H1 (cell line): ENCODE measurements at regions of chr6 and their contacts with region 1.

Region 1: GRCh38 chr6:99905209-99906106 is 88.6 kb downstream of the MCHR2 start:
- DNase-seq: peak in 1 of 2 experiments; percentile 5
- H3K4me3 ChIP-seq: no peak overlapping the region
- H3K27ac ChIP-seq: no peak overlapping the region
- H3K4me1 ChIP-seq: no peaks in the 10 kb centered on the region
- H3K27me3 ChIP-seq: no peaks in the 10 kb centered on the region
- CTCF ChIP-seq: peak in 2 of 3 experiments; percentile 71 to 98; a peak in 3 of 4 replicates
- EP300 ChIP-seq: no peak
- POLR2A ChIP-seq: no peak
- RAD21 ChIP-seq: peak; percentile 78 to 80

Region 2: DNA sequence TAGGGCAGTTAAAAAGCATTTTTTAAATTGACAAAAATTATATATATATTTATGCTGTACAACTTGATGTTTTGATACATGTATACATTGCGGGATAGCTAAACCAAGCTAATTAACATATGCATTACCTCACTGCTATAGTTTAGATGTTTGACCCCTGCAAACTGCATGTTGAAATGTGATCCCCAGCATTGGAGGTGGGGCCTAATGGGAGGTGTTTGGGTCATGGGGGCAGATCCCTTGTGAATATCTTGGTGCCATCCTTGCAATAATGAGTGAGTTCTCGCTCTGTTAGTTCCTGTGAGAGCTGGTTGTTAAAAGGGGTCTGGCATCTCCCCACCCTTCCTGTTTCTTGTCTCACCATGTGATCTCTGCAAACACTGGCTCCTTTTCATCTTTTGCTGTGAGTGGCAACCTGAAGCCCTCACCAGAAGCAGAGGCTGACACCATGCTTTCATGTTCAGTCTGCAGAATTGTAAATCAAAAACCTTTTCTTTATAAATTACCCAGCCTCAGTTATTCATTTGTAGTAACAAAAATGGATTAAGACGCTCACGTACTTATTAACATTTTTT is 23.2 kb before region 1 on chr6:
- CTCF ChIA-PET with region 1: interaction called, 26 read pairs
- POLR2A ChIA-PET with region 1: no interaction called
- DNase-seq: no peak
- H3K4me3 ChIP-seq: no peak overlapping the region
- H3K27ac ChIP-seq: no peak overlapping the region
- H3K4me1 ChIP-seq: no peaks in the 10 kb centered on the region
- H3K27me3 ChIP-seq: no peaks in the 10 kb centered on the region
- CTCF ChIP-seq: no peak
- EP300 ChIP-seq: no peak
- POLR2A ChIP-seq: no peak
- RAD21 ChIP-seq: no peak

Region 3: GRCh38 chr6:99894815-99895214 is 10.6 kb before region 1 on chr6:
- CTCF ChIA-PET with region 1: interaction called, 26 read pairs
- POLR2A ChIA-PET with region 1: no interaction called
- DNase-seq: no peak
- H3K4me3 ChIP-seq: no peak overlapping the region
- H3K27ac ChIP-seq: no peak overlapping the region
- H3K4me1 ChIP-seq: no peaks in the 10 kb centered on the region
- H3K27me3 ChIP-seq: no peaks in the 10 kb centered on the region
- CTCF ChIP-seq: no peak
- EP300 ChIP-seq: no peak
- POLR2A ChIP-seq: no peak
- RAD21 ChIP-seq: no peak

Region 4: DNA sequence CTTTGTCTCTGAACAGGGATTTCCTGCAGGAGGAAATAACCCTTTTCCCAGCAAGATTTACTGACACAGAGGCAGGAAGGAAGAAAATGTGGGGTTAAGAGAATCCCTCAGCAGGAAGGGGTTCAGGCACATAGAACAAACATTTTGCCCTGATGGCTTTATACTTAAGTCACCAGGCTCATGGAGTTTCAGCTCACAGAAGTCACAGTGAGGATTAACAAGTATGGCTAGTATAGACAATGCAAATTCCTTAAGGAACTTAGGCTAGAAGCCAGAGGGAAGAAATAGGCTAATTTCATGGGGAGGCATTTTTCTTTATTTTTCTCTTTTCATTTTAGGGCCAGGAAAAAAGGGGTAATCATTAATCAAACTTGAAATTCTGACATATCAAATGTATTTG is 38.4 kb after region 1 on chr6:
- CTCF ChIA-PET with region 1: interaction called, 12 read pairs
- POLR2A ChIA-PET with region 1: no interaction called
- DNase-seq: no peak
- H3K4me3 ChIP-seq: no peak overlapping the region
- H3K27ac ChIP-seq: no peak overlapping the region
- H3K4me1 ChIP-seq: no peaks in the 10 kb centered on the region
- H3K27me3 ChIP-seq: no peaks in the 10 kb centered on the region
- CTCF ChIP-seq: no peak
- EP300 ChIP-seq: no peak
- POLR2A ChIP-seq: no peak
- RAD21 ChIP-seq: no peak